ENCODE measurements at regions of chr17 and their contacts with region 1.

Region 1: GRCh38 chr17:5419356-5419958 is at the start of gene NUP88:
- DNase-seq: peak; percentile 98
- ATAC-seq: peak; percentile 95
- H3K4me3 Mint-ChIP-seq: peak within 1 kb of the TSS; percentile 98
- H3K27ac Mint-ChIP-seq: peak within 1 kb of the TSS; percentile 100
- H3K4me1 Mint-ChIP-seq: peaks cover 41% of the 10 kb centered on the region
- H3K27me3 Mint-ChIP-seq: no peaks in the 10 kb centered on the region
- total RNA-seq, gene NUP88: 135 to 199 TPM

Region 2: DNA sequence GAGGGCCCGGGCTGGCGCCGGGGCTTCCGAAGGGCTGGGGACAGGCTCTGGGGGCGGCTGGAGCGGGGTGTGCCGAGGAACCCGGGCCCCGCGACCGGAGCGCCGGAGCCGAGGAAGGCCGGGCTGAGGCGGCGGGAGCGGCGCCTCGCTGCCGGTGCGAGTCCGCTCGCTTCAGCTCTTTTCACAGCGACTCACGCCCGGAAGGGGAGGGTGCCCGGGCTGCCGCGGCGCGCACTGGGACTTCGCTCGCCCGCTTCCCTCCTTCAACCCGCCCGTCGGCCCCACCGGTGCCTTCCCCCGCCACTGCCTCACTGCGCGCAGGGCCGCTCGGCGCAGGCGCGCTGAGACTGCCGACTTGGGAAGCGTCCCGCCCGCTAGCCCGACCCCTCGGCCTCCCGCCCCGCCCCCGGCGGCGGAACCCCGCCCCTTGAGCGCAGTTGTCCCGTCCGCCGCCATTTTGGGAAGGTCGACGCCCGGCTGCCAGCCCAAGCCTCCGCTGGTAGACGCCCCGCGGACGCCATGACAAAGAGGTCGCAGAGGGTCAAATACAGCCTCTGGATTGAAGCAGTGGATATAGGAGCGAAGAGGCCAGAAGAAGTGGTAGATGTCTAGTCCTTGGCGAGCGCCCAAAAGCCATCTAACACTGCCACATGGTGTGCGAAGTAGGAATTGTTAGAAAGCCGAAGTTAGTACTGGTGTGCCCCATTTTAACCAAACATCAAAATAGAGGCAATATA is 1053.0 kb before region 1 on chr17 and contains the start of gene UBE2G1:
- CTCF ChIA-PET with region 1: no interaction called
- POLR2A ChIA-PET with region 1: no interaction called
- intact Hi-C with region 1: loop called in 1 of 2 experiments (anchors 10 kb)
- DNase-seq: peak; percentile 99
- ATAC-seq: peak; percentile 86
- H3K4me3 Mint-ChIP-seq: peak within 1 kb of the TSS; percentile 65
- H3K27ac Mint-ChIP-seq: peak within 1 kb of the TSS; percentile 90
- H3K4me1 Mint-ChIP-seq: peaks cover 29% of the 10 kb centered on the region
- H3K27me3 Mint-ChIP-seq: no peaks in the 10 kb centered on the region
- total RNA-seq, gene UBE2G1: 51.0 to 52.9 TPM

Region 3: GRCh38 chr17:4967539-4968165 is 451.8 kb before region 1 on chr17 and contains the start of gene SPAG7:
- CTCF ChIA-PET with region 1: no interaction called
- POLR2A ChIA-PET with region 1: no interaction called
- intact Hi-C with region 1: loop called in 1 of 2 experiments (anchors 1 kb)
- DNase-seq: peak; percentile 96
- ATAC-seq: peak; percentile 54
- H3K4me3 Mint-ChIP-seq: no peak within 1 kb of the TSS
- H3K27ac Mint-ChIP-seq: no peak within 1 kb of the TSS
- H3K4me1 Mint-ChIP-seq: peaks cover 40% of the 10 kb centered on the region
- H3K27me3 Mint-ChIP-seq: no peaks in the 10 kb centered on the region
- total RNA-seq, gene SPAG7: 61.4 to 69.4 TPM

Region 4: GRCh38 chr17:5191541-5192417 is 227.7 kb before region 1 on chr17 and contains the start of gene ZNF594:
- CTCF ChIA-PET with region 1: interaction called, 4 read pairs
- POLR2A ChIA-PET with region 1: no interaction called
- intact Hi-C with region 1: loop called in 1 of 2 experiments (anchors 1 kb)
- DNase-seq: peak; percentile 99
- ATAC-seq: peak; percentile 100
- H3K4me3 Mint-ChIP-seq: peak within 1 kb of the TSS; percentile 94
- H3K27ac Mint-ChIP-seq: peak within 1 kb of the TSS; percentile 88
- H3K4me1 Mint-ChIP-seq: peaks cover 27% of the 10 kb centered on the region
- H3K27me3 Mint-ChIP-seq: no peaks in the 10 kb centered on the region
- total RNA-seq, gene ZNF594: 8.0 to 8.4 TPM

Region 5: DNA sequence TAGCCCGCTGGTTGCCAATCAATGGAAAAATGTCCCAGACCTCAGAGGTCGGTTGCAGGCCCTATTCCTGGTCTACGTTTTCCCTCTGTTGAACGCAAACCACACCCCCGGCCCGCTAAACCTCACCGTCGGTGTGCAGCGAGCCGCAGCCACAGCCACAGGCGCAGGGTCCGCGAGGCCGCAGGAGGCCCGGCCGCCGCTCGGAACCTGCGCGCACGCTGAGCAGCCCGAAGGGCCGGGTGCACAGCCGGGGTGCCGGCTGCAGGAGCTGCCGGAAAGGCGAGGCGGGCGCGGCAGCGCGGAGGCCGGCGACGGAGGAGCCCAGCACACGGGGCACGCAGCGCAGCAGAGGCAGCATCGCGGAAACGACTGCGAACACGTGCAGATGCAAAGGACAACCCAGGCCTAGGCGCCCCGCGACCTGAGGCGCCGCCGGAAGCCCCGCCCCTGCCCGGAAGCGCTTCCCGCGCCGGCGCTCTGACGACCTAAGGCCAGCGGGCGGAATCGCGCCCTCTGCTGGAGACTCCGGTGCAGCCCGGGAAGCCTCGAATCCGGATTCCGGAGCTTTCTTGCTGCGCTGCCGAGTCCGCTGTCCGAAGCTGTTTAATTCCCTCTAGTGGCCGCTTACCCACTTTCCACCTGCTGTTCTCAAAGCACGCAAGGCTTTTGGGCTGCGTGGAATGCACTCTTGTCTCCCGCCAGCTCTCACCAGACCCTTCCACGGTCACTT is 19.4 kb after region 1 on chr17 and contains the start of gene C1QBP:
- CTCF ChIA-PET with region 1: interaction called, 19 read pairs
- POLR2A ChIA-PET with region 1: interaction called, 11 read pairs
- intact Hi-C with region 1: loop called (anchors 1 kb)
- DNase-seq: peak; percentile 96
- ATAC-seq: peak; percentile 92
- H3K4me3 Mint-ChIP-seq: peak within 1 kb of the TSS; percentile 89
- H3K27ac Mint-ChIP-seq: peak within 1 kb of the TSS; percentile 92
- H3K4me1 Mint-ChIP-seq: peaks cover 44% of the 10 kb centered on the region
- H3K27me3 Mint-ChIP-seq: no peaks in the 10 kb centered on the region
- total RNA-seq, gene C1QBP: 432 to 457 TPM

Region 6: DNA sequence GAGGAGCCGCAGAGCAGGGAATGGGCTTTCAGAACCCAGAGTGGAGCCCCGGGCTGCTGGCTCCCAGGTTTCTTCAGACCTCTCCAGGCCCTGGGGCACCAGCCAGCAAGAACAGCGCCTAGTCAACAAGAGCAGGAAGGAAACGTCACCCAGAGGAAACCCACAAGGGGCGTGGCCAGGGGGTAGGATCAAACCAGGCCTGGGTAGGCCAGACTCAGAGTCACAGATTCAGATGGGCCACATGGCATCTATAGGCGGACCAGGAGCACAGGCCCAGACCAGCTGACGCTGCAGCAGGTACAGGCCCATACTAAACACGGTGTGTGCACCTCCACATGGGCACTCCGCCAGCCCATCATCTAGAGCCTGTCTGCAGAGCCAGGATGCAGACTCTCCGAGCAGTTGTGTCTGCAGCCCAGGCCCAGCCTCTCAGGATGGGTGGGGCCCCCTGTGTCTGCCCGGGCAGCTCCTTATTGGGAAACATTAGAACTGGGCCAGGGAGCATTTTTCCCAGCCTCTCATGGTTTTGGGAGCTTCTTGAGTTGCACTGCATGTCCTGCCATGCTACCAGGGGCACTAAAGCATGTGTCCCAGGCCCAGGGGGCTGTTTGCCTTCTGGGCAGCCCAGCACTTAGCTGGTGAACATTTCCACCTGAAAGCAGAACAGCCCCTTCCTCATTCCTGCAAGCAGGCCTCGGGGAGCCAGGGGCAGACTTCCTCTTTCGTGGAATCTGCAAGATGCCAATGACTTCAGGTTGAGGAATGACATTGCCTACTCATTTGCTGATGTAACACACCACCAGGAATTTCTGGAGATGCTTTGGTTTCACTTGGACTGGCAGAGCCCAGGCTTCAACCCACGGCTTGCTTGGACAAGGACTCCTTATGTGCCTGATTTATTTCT is 165.2 kb after region 1 on chr17 and contains the start of gene NLRP1:
- CTCF ChIA-PET with region 1: no interaction called
- POLR2A ChIA-PET with region 1: no interaction called
- intact Hi-C with region 1: loop called in 1 of 2 experiments (anchors 1 kb)
- DNase-seq: peak; percentile 97
- ATAC-seq: peak; percentile 93
- H3K4me3 Mint-ChIP-seq: peak within 1 kb of the TSS; percentile 92
- H3K27ac Mint-ChIP-seq: peak within 1 kb of the TSS; percentile 94
- H3K4me1 Mint-ChIP-seq: peaks cover 62% of the 10 kb centered on the region
- H3K27me3 Mint-ChIP-seq: no peaks in the 10 kb centered on the region
- total RNA-seq, gene NLRP1: 31.2 to 34.0 TPM

Region 7: GRCh38 chr17:5745111-5745813 is 325.8 kb after region 1 on chr17:
- CTCF ChIA-PET with region 1: no interaction called
- POLR2A ChIA-PET with region 1: no interaction called
- intact Hi-C with region 1: no loop called
- DNase-seq: no peak
- ATAC-seq: no peak
- H3K4me3 Mint-ChIP-seq: no peak overlapping the region
- H3K27ac Mint-ChIP-seq: no peak overlapping the region
- H3K4me1 Mint-ChIP-seq: no peaks in the 10 kb centered on the region
- H3K27me3 Mint-ChIP-seq: peaks cover 13% of the 10 kb centered on the region

Region 8: GRCh38 chr17:6098050-6098822 is 678.8 kb after region 1 on chr17:
- CTCF ChIA-PET with region 1: no interaction called
- POLR2A ChIA-PET with region 1: no interaction called
- intact Hi-C with region 1: no loop called
- DNase-seq: no peak
- ATAC-seq: no peak
- H3K4me3 Mint-ChIP-seq: no peak overlapping the region
- H3K27ac Mint-ChIP-seq: no peak overlapping the region
- H3K4me1 Mint-ChIP-seq: no peaks in the 10 kb centered on the region
- H3K27me3 Mint-ChIP-seq: no peaks in the 10 kb centered on the region